Gastrocnemius medialis (tissue), 4 donors: ENCODE measurements at regions of chr11 and their contacts with region 1.

Region 1: GRCh38 chr11:12963792-12964536 is 45.2 kb upstream of the RASSF10 start:
- DNase-seq: peak; percentile 23 to 28
- ATAC-seq: peak; percentile 58 to 82
- H3K4me3 ChIP-seq: no peak overlapping the region
- H3K27ac ChIP-seq: no peak overlapping the region
- H3K4me1 ChIP-seq: no peaks in the 10 kb centered on the region
- H3K27me3 ChIP-seq: no peaks in the 10 kb centered on the region
- CTCF ChIP-seq: peak; percentile 47 to 89 (median 73)
- POLR2A ChIP-seq: no peak

Region 2: GRCh38 chr11:12717851-12718291 is 246.1 kb before region 1 on chr11:
- in situ Hi-C with region 1: no loop called
- intact Hi-C with region 1: no loop called
- DNase-seq: no peak
- ATAC-seq: no peak
- H3K4me3 ChIP-seq: no peak overlapping the region
- H3K27ac ChIP-seq: no peak overlapping the region
- H3K4me1 ChIP-seq: peaks cover 67 to 92% of the 10 kb centered on the region in 2 donors
- H3K27me3 ChIP-seq: no peaks in the 10 kb centered on the region
- CTCF ChIP-seq: no peak
- POLR2A ChIP-seq: no peak

Region 3: DNA sequence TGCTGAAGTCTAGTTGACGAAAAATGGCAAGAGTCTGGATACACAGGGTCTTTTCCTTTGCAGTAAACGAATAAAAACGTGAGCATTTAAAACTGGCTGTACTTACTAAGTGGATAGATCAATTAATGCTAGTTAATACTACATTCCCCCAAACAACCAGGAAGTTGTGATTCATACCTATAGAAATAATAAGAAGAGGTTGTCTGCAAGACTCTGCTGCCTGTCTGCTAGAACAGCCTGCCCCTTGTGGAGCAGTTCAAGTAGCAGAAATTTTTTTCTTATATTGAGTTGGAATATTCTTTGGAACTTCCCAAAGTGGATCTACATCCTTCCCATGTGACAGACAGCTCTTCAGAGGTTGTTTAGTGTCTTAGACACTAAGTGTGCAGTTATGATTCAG is 202.9 kb before region 1 on chr11:
- in situ Hi-C with region 1: no loop called
- intact Hi-C with region 1: no loop called
- DNase-seq: no peak
- ATAC-seq: no peak
- H3K4me3 ChIP-seq: no peak overlapping the region
- H3K27ac ChIP-seq: peak overlapping the region; percentile 12 to 78 (median 26)
- H3K4me1 ChIP-seq: peaks cover 67 to 86% of the 10 kb centered on the region in 2 donors
- H3K27me3 ChIP-seq: no peaks in the 10 kb centered on the region
- CTCF ChIP-seq: peak in 1 of 5 experiments; percentile 11
- POLR2A ChIP-seq: no peak

Region 4: GRCh38 chr11:13183094-13183825 is 219.3 kb after region 1 on chr11:
- in situ Hi-C with region 1: loop called in 2 of 4 experiments (anchors 25 kb)
- intact Hi-C with region 1: loop called (anchors 5 kb)
- DNase-seq: no peak
- ATAC-seq: peak in 1 of 2 donors; percentile 26
- H3K4me3 ChIP-seq: peak overlapping the region in 2 of 4 donors; percentile 7 to 12
- H3K27ac ChIP-seq: no peak overlapping the region
- H3K4me1 ChIP-seq: peaks cover 0 to 5% of the 10 kb centered on the region in 2 donors
- H3K27me3 ChIP-seq: no peaks in the 10 kb centered on the region
- CTCF ChIP-seq: peak in 3 of 5 experiments; percentile 3 to 39 (median 34)
- POLR2A ChIP-seq: no peak